K562 (cell line): ENCODE measurements at regions of chr10 and their contacts with region 1.

Region 1: DNA sequence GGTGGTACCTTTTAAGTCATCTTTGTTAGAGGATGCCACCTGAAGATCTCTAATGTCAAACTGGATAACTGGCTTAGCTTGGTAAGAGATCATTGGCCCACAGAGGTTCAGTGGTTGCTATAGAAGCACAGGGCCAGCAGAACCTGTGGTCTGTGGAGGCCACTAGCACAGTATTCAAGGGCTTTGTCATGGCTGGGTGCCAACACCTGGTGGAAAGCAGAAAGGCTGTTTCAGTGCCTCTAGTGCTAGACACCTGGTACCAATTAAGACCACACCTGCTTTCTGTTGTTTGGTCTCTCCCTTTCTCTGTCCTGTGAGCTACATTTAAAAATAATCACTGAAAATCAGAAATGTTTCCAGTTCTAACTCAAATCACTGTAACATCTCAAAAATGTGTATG is 10.0 kb upstream of the PCGF5 start:
- DNase-seq: no peak
- ATAC-seq: no peak
- H3K4me3 ChIP-seq: no peak overlapping the region
- H3K27ac ChIP-seq: no peak overlapping the region
- H3K4me1 ChIP-seq: peaks cover 0 to 6% of the 10 kb centered on the region in 2 experiments; a peak in 2 of 5 replicates
- H3K27me3 ChIP-seq: no peaks in the 10 kb centered on the region
- CTCF ChIP-seq: no peak
- EP300 ChIP-seq: no peak
- POLR2A ChIP-seq: no peak
- RAD21 ChIP-seq: no peak

Region 2: GRCh38 chr10:91103384-91104192 is 106.8 kb before region 1 on chr10:
- CTCF ChIA-PET with region 1: no interaction called
- POLR2A ChIA-PET with region 1: no interaction called
- in situ Hi-C with region 1: no loop called
- intact Hi-C with region 1: loop called (anchors 5 kb)
- DNase-seq: peak; percentile 60 to 91 (median 76)
- ATAC-seq: peak; percentile 98
- H3K4me3 ChIP-seq: no peak overlapping the region
- H3K27ac ChIP-seq: peak overlapping the region; percentile 89
- H3K4me1 ChIP-seq: peaks cover 27 to 34% of the 10 kb centered on the region in 2 experiments
- H3K27me3 ChIP-seq: no peaks in the 10 kb centered on the region
- CTCF ChIP-seq: no peak
- EP300 ChIP-seq: peak; percentile 83
- POLR2A ChIP-seq: no peak
- RAD21 ChIP-seq: no peak

Region 3: DNA sequence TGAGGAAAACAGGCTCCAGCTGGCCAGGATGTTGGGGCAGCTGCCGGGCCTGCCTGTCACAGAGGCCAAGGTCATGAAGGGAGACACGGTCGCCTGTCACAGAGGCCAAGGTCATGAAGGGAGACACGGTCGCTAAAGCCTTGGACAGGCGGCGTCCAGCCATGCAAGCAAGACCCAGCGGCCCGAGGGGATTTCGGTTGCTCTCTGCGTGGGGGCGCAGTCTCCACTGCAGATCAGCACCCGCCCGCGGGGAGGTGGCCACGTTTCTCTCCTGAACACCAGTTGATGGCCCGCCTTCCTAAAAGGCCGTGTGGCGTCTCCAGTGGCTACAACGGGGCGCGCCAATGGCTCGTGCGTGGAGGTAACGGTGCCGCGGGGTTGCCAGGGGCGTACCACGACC is 56.9 kb before region 1 on chr10:
- CTCF ChIA-PET with region 1: no interaction called
- POLR2A ChIA-PET with region 1: no interaction called
- in situ Hi-C with region 1: no loop called
- intact Hi-C with region 1: no loop called
- DNase-seq: no peak
- ATAC-seq: no peak
- H3K4me3 ChIP-seq: no peak overlapping the region
- H3K27ac ChIP-seq: no peak overlapping the region
- H3K4me1 ChIP-seq: peaks cover 0 to 6% of the 10 kb centered on the region in 2 experiments; a peak in 2 of 5 replicates
- H3K27me3 ChIP-seq: no peaks in the 10 kb centered on the region; a peak in 2 of 5 replicates
- CTCF ChIP-seq: no peak
- EP300 ChIP-seq: no peak
- POLR2A ChIP-seq: no peak
- RAD21 ChIP-seq: no peak

Region 4: DNA sequence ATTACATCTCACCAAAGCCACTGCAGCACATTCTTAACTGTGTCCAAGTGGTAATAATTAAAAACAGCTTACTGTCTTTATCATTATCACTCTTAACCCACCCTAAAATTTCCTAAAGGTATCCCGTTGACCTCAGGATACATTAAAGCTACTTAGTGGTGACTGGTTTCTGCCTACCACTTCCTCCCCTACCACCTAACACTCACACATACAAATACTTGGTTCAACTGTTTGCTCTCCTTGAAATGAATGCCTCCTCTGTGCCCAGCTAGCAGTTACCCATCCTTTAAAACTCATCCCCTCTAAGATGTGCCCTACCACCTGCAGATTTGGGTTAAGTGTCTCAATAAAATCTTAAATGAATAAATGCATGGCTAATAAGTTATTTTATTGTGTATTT is 17.1 kb after region 1 on chr10:
- CTCF ChIA-PET with region 1: no interaction called
- POLR2A ChIA-PET with region 1: no interaction called
- in situ Hi-C with region 1: no loop called
- intact Hi-C with region 1: no loop called
- DNase-seq: no peak
- ATAC-seq: no peak
- H3K4me3 ChIP-seq: no peak overlapping the region
- H3K27ac ChIP-seq: no peak overlapping the region
- H3K4me1 ChIP-seq: peaks cover 0 to 1% of the 10 kb centered on the region in 2 experiments; a peak in 2 of 5 replicates
- H3K27me3 ChIP-seq: no peaks in the 10 kb centered on the region
- CTCF ChIP-seq: no peak
- EP300 ChIP-seq: no peak
- POLR2A ChIP-seq: no peak
- RAD21 ChIP-seq: no peak

Region 5: GRCh38 chr10:91257310-91257709 is 46.9 kb after region 1 on chr10:
- CTCF ChIA-PET with region 1: no interaction called
- POLR2A ChIA-PET with region 1: no interaction called
- in situ Hi-C with region 1: no loop called
- intact Hi-C with region 1: no loop called
- DNase-seq: no peak
- ATAC-seq: no peak
- H3K4me3 ChIP-seq: no peak overlapping the region
- H3K27ac ChIP-seq: no peak overlapping the region
- H3K4me1 ChIP-seq: no peaks in the 10 kb centered on the region
- H3K27me3 ChIP-seq: no peaks in the 10 kb centered on the region
- CTCF ChIP-seq: no peak
- EP300 ChIP-seq: no peak
- POLR2A ChIP-seq: no peak
- RAD21 ChIP-seq: no peak